Activated CD8-positive, alpha-beta T cell treated with anti-CD3 and anti-CD28 coated beads, Interleukin-2, amount 10 ng/mL, durations not matched to agents 7 days and 5 days (primary cell): ENCODE measurements at regions of chr1 and their contacts with region 1.

Region 1: GRCh38 chr1:206982216-206982615 is 12.0 kb upstream of the FCAMR start:
- DNase-seq: peak; percentile 75
- ATAC-seq: peak; percentile 82
- H3K4me3 Mint-ChIP-seq: no peak overlapping the region
- H3K27ac Mint-ChIP-seq: no peak overlapping the region
- H3K4me1 Mint-ChIP-seq: no peaks in the 10 kb centered on the region
- H3K27me3 Mint-ChIP-seq: peaks cover 32% of the 10 kb centered on the region

Region 2: GRCh38 chr1:206635080-206635977 is 346.9 kb before region 1 on chr1 and contains the start of gene DYRK3:
- CTCF ChIA-PET with region 1: interaction called, 23 read pairs
- POLR2A ChIA-PET with region 1: no interaction called
- DNase-seq: peak; percentile 95
- ATAC-seq: peak; percentile 95
- H3K4me3 Mint-ChIP-seq: peak within 1 kb of the TSS; percentile 80
- H3K27ac Mint-ChIP-seq: peak within 1 kb of the TSS; percentile 83
- H3K4me1 Mint-ChIP-seq: peaks cover 27% of the 10 kb centered on the region
- H3K27me3 Mint-ChIP-seq: peaks cover 17% of the 10 kb centered on the region
- total RNA-seq, gene DYRK3: 5.3 to 5.9 TPM

Region 3: GRCh38 chr1:206684478-206685333 is 297.5 kb before region 1 on chr1 and contains the start of gene MAPKAPK2:
- CTCF ChIA-PET with region 1: no interaction called
- POLR2A ChIA-PET with region 1: no interaction called
- DNase-seq: peak; percentile 81
- ATAC-seq: peak; percentile 70
- H3K4me3 Mint-ChIP-seq: peak within 1 kb of the TSS; percentile 99
- H3K27ac Mint-ChIP-seq: peak within 1 kb of the TSS; percentile 95
- H3K4me1 Mint-ChIP-seq: peaks cover 41% of the 10 kb centered on the region
- H3K27me3 Mint-ChIP-seq: peaks cover 20% of the 10 kb centered on the region
- total RNA-seq, gene MAPKAPK2: 59.0 to 61.3 TPM

Region 4: GRCh38 chr1:206734499-206735142 is 247.6 kb before region 1 on chr1:
- CTCF ChIA-PET with region 1: interaction called, 34 read pairs
- POLR2A ChIA-PET with region 1: no interaction called
- DNase-seq: peak; percentile 74
- ATAC-seq: peak; percentile 28
- H3K4me3 Mint-ChIP-seq: no peak overlapping the region
- H3K27ac Mint-ChIP-seq: peak overlapping the region; percentile 44
- H3K4me1 Mint-ChIP-seq: peaks cover 70% of the 10 kb centered on the region
- H3K27me3 Mint-ChIP-seq: no peaks in the 10 kb centered on the region

Region 5: GRCh38 chr1:206856674-206857464 is 125.3 kb before region 1 on chr1:
- CTCF ChIA-PET with region 1: interaction called, 18 read pairs
- POLR2A ChIA-PET with region 1: no interaction called
- DNase-seq: no peak
- ATAC-seq: peak; percentile 53
- H3K4me3 Mint-ChIP-seq: no peak overlapping the region
- H3K27ac Mint-ChIP-seq: no peak overlapping the region
- H3K4me1 Mint-ChIP-seq: peaks cover 15% of the 10 kb centered on the region
- H3K27me3 Mint-ChIP-seq: peaks cover 25% of the 10 kb centered on the region

Region 6: DNA sequence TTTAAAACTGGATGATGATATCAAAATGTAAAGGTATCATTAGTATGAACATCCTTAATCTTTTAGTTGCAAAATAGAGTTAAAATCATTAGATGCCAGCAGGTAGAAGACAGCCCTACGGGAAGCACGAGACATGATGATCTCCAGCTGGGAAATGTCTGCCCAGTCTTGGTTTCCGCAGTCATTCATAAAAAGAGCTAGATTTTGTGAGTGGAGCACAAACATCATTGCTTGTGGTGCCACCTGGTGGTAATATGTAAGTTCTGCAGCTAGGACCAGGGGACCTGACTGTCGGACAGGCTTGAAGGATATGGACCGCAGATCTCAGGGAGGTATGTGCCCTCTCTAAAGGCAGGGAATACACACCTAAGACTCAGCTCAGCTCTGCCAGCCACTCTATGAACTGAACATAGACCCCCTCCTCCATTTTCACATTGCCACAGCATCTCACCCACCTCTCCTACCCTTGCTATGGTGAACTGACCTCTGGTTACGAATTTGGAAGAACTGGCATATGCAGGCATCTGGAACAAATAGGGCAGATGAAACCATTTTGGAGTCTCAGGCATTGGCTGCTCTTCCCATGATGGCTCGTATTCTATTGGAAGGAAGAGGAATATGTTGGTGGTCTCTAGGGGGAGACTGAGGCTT is 69.6 kb before region 1 on chr1:
- CTCF ChIA-PET with region 1: interaction called, 105 read pairs
- POLR2A ChIA-PET with region 1: no interaction called
- DNase-seq: peak; percentile 80
- ATAC-seq: peak; percentile 64
- H3K4me3 Mint-ChIP-seq: no peak overlapping the region
- H3K27ac Mint-ChIP-seq: no peak overlapping the region
- H3K4me1 Mint-ChIP-seq: peaks cover 65% of the 10 kb centered on the region
- H3K27me3 Mint-ChIP-seq: no peaks in the 10 kb centered on the region

Region 7: GRCh38 chr1:206955476-206956451 is 26.5 kb before region 1 on chr1:
- CTCF ChIA-PET with region 1: interaction called, 24 read pairs
- POLR2A ChIA-PET with region 1: interaction called, 3 read pairs
- DNase-seq: no peak
- ATAC-seq: no peak
- H3K4me3 Mint-ChIP-seq: no peak overlapping the region
- H3K27ac Mint-ChIP-seq: no peak overlapping the region
- H3K4me1 Mint-ChIP-seq: peaks cover 13% of the 10 kb centered on the region
- H3K27me3 Mint-ChIP-seq: no peaks in the 10 kb centered on the region

Region 8: GRCh38 chr1:206992790-206993189 is 10.6 kb after region 1 on chr1:
- CTCF ChIA-PET with region 1: interaction called, 22 read pairs
- POLR2A ChIA-PET with region 1: interaction called, 3 read pairs
- DNase-seq: no peak
- ATAC-seq: no peak
- H3K4me3 Mint-ChIP-seq: no peak overlapping the region
- H3K27ac Mint-ChIP-seq: no peak overlapping the region
- H3K4me1 Mint-ChIP-seq: no peaks in the 10 kb centered on the region
- H3K27me3 Mint-ChIP-seq: peaks cover 43% of the 10 kb centered on the region

Region 9: DNA sequence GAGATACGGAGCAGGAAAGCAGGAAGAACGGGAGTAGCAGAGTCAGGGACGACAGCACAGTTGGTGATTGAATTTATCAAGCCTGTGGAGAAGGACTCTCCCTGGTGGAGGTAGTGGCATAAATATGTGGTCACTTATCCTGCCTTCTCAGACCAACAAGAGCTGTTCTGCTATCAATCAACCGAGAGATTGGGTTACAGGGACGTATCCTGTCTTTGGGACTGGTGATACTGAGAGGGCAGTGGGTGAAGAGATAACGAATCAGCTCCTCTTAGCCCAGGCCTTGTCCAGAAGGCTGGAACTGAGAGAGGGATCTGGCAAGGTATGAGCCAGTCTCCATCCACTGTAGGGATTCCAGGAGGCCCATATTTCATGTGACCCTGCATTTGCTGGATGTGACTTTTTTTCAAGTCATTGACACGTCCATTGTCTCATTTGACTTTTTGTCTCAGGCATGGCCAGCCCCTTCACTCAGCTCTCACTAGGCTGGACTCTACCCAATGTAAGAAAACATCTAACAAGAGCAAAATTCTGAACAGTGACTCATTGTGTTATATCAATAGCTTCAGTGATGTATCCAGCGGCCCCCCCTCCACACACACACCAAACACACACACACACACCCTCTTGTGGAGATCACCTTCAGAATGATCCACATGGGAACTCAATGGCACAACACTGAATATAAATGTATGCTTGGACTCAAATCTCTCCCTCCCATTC is 39.1 kb after region 1 on chr1:
- CTCF ChIA-PET with region 1: no interaction called
- POLR2A ChIA-PET with region 1: no interaction called
- DNase-seq: no peak
- ATAC-seq: no peak
- H3K4me3 Mint-ChIP-seq: no peak overlapping the region
- H3K27ac Mint-ChIP-seq: no peak overlapping the region
- H3K4me1 Mint-ChIP-seq: peaks cover 6% of the 10 kb centered on the region
- H3K27me3 Mint-ChIP-seq: peaks cover 11% of the 10 kb centered on the region